PC-3 (cell line): ENCODE measurements at regions of chr1 and their contacts with region 1.

Region 1: DNA sequence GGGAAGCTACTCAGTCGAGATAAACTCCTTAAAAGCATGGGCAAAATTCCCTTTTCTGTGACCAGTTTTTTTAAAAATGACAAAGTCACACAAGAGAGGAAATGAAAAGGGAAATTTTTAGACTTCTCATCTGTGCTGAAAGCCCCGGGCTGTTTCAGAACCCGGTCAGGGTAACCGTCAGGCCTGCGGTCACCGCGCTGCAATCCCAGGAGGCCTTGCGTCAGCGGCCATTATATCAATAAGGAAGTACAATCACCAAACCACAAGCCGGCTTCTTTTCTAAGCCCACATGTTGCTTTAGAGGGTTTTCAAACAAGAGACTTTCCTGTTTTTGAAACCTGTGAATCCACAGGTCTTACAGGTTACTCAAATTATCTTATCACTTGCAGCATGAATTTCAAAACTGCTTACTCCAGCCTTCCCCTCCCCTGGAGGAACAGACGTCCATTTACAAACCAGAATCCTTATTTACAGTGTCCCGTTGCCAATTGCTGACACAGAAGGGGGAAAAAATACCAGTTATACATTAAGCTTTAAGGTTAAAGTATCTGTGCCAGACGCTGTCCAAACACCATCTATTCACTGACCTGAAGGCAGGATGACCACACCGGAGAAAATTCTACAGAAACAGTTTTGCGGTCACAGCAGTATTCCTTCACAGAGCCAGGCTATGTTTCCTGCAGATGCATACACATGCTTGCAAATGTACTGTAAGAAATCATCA is 165.3 kb downstream of the TOMM20 start:
- DNase-seq: peak; percentile 87
- ATAC-seq: peak; percentile 50
- H3K4me3 ChIP-seq: peak overlapping the region; percentile 41; the same call in 1 of the 2 replicates
- H3K27ac ChIP-seq: peak overlapping the region; percentile 100
- H3K4me1 ChIP-seq: peaks cover 67% of the 10 kb centered on the region
- H3K27me3 ChIP-seq: no peaks in the 10 kb centered on the region
- CTCF ChIP-seq: no peak

Region 2: DNA sequence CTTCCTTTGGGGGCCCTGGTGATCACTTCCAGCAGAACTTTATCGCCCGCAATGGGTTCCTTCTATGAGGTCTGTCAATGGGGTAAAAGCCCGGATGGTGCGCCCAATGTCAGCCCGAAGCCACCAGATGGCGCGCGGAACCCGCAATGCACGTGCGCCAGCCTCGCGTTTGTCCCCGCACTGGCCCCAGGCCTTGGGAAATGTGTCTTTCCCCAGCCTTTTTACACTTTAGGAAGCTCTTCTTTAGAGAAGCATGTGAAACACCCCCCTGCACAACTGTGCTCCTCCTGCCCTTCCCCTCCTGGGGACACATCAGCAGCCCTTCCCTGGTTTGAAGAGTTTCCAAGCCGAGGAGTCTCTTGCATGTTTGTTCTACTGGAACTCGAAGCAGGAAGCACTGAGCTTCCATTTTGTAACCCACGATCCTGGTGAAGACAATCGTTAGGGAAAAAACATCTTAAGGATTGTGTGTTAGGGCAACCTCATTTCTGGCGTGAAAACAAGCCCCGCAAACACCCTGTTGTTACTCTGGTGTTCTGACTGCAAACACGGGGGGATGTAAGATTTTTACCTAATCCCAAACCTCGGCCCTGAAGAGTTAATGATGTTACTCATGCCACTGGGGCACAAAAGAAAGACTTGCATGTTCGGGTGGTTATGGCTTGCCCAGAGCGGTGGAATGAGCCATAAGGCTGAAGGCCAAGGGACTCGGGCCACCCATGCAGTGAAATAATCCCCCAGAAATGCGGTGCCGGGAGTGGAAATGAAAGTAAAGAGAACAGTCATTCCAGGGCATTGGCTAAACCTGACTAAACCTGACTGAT is 464.0 kb before region 1 on chr1:
- CTCF ChIA-PET with region 1: no interaction called
- POLR2A ChIA-PET with region 1: no interaction called
- intact Hi-C with region 1: loop called (anchors 1 kb)
- DNase-seq: peak; percentile 82
- ATAC-seq: peak; percentile 72
- H3K4me3 ChIP-seq: peak overlapping the region; percentile 40; the same call in 1 of the 2 replicates
- H3K27ac ChIP-seq: peak overlapping the region; percentile 88
- H3K4me1 ChIP-seq: peaks cover 46% of the 10 kb centered on the region
- H3K27me3 ChIP-seq: no peaks in the 10 kb centered on the region
- CTCF ChIP-seq: peak; percentile 84

Region 3: GRCh38 chr1:234862944-234863515 is 100.3 kb before region 1 on chr1:
- CTCF ChIA-PET with region 1: no interaction called
- POLR2A ChIA-PET with region 1: interaction called, 3 read pairs
- intact Hi-C with region 1: loop called (anchors 5 kb)
- DNase-seq: no peak
- ATAC-seq: no peak
- H3K4me3 ChIP-seq: no peak overlapping the region
- H3K27ac ChIP-seq: no peak overlapping the region
- H3K4me1 ChIP-seq: peaks cover 35% of the 10 kb centered on the region
- H3K27me3 ChIP-seq: no peaks in the 10 kb centered on the region
- CTCF ChIP-seq: no peak

Region 4: DNA sequence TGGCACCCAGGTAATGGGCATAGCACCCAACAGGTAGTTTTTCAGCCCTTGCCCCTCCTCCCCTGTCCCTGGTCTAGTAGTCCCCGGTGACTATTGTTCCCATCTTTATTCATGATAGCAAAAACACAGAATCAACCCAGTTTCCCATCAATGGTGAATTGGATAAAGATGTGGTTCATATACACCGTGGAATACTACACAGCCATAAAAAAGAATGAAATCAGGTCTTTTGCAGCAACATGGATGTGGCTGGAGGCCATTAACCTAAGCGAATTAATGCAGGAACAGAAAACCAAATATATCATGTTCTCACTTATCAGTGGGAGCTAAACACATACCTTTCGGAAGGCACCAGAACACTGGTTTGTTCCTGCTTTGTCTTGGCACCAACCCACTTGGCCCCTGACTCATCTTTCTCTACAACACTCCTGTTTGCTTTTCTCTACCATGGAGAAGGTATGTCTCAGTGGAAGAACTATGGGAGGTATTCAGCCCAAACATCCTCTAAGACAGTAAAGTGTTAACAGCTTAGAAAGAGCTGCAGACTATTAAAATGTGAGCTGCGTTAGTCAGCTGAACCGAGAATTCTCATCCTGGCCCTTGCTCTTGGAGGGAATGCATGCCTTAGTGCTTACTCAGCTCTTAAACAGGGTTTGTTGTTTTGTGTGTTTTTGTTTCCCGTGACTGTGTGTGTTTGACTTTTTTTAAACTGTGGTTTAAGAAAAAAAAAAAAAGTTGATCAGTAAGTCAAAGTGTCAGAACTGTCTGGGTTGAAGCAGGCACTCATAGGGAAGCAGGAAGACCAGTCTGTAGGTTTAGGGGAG is 37.7 kb before region 1 on chr1:
- CTCF ChIA-PET with region 1: no interaction called
- POLR2A ChIA-PET with region 1: no interaction called
- intact Hi-C with region 1: loop called (anchors 2 kb)
- DNase-seq: peak; percentile 96
- ATAC-seq: peak; percentile 97
- H3K4me3 ChIP-seq: no peak overlapping the region
- H3K27ac ChIP-seq: peak overlapping the region; percentile 92
- H3K4me1 ChIP-seq: peaks cover 26% of the 10 kb centered on the region
- H3K27me3 ChIP-seq: no peaks in the 10 kb centered on the region
- CTCF ChIP-seq: no peak

Region 5: GRCh38 chr1:234934611-234935033 is 28.7 kb before region 1 on chr1:
- CTCF ChIA-PET with region 1: no interaction called
- POLR2A ChIA-PET with region 1: interaction called, 4 read pairs
- intact Hi-C with region 1: loop called (anchors 1 kb)
- DNase-seq: peak; percentile 65
- ATAC-seq: peak; percentile 86
- H3K4me3 ChIP-seq: no peak overlapping the region
- H3K27ac ChIP-seq: peak overlapping the region; percentile 73
- H3K4me1 ChIP-seq: peaks cover 24% of the 10 kb centered on the region
- H3K27me3 ChIP-seq: no peaks in the 10 kb centered on the region
- CTCF ChIP-seq: no peak

Region 6: GRCh38 chr1:235697508-235697907 is 734.2 kb after region 1 on chr1:
- CTCF ChIA-PET with region 1: no interaction called
- POLR2A ChIA-PET with region 1: no interaction called
- intact Hi-C with region 1: no loop called
- DNase-seq: no peak
- ATAC-seq: no peak
- H3K4me3 ChIP-seq: no peak overlapping the region
- H3K27ac ChIP-seq: no peak overlapping the region
- H3K4me1 ChIP-seq: no peaks in the 10 kb centered on the region
- H3K27me3 ChIP-seq: no peaks in the 10 kb centered on the region
- CTCF ChIP-seq: no peak